Posterior cingulate gyrus (tissue), 11 donors: ENCODE measurements at regions of chr10 and their contacts with region 1.

Region 1: GRCh38 chr10:62038609-62039190 is 137.2 kb downstream of the ARID5B start:
- DNase-seq: peak; percentile 23 to 95 (median 73)

Region 2: GRCh38 chr10:61903221-61903927 is 135.3 kb before region 1 on chr10:
- intact Hi-C with region 1: loop called (anchors 5 kb)
- DNase-seq: peak; percentile 14 to 90 (median 55)

Region 3: DNA sequence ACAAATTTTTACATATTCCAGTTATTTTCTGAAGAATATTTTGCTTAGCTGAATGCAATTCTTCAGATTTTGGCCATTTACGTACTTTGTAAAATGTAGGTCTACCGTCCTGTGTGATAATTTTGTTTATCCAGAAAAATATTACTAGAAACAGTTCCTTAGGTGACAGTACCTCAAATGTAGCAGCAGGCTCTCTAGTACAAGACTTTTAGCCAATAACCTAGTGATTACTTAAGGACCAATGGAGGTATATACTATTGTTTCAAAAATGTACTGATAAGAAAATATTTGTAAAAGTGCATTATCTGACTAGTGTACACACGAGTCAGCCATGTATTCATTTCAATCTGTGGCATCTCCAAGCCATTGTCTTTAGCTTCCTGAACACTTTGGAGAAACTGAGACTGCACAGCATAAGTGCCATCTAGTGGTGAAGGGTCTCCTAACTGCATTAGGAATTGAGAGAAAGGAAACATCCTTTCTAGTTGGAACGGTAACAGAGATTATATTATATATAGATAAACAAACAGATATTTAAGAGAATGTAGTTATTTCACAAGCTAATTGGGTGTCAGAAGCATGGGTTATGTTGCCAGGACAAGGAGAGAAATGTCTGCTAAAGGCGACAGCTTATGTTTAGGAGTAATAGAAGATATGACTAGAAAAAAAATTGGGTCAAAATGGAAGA is 206.2 kb after region 1 on chr10:
- intact Hi-C with region 1: loop called (anchors 1 kb)
- DNase-seq: peak in 5 of 10 donors; percentile 23 to 57 (median 41)

Region 4: GRCh38 chr10:63072951-63073350 is 1034.3 kb after region 1 on chr10:
- intact Hi-C with region 1: no loop called
- DNase-seq: no peak